ENCODE measurements at regions of chr16 and their contacts with region 1.

Region 1: GRCh38 chr16:11407047-11407982 is 62.1 kb downstream of the RMI2 start:
- DNase-seq: peak; percentile 77
- ATAC-seq: peak; percentile 62
- H3K4me3 Mint-ChIP-seq: no peak overlapping the region
- H3K27ac Mint-ChIP-seq: no peak overlapping the region
- H3K4me1 Mint-ChIP-seq: peaks cover 2% of the 10 kb centered on the region
- H3K27me3 Mint-ChIP-seq: no peaks in the 10 kb centered on the region

Region 2: DNA sequence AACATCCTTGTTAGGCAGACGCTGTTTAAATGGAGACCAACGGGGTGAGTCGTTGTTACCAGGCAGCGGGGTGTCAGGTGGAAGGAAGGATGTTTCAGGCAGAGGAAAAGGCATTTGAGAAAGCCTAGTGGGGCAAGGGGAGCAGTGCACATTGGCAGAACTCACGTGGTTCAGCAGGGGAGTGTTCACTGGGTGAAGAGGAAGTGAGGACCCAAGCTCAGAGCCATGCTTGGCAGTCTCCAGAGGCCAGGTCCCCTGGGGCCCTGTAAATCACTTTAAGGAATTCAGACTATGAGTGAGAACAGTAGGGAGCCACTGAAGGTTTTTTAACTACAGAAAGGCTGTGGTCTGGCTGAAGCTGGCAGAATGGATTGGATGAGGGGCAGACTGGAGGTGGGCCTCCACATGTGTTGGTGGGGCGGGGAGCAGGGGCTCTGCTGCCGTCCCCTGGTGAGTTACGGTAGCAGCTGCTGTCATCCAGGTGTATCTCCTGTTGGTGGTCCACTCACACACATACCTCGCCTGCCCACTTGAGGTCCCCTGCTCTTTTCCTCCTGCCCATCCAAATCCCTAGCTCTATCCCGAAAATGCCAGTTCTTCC is 457.8 kb before region 1 on chr16:
- CTCF ChIA-PET with region 1: interaction called, 17 read pairs
- POLR2A ChIA-PET with region 1: no interaction called
- DNase-seq: peak; percentile 80
- ATAC-seq: peak; percentile 76
- H3K4me3 Mint-ChIP-seq: peak overlapping the region; percentile 0
- H3K27ac Mint-ChIP-seq: peak overlapping the region; percentile 28
- H3K4me1 Mint-ChIP-seq: peaks cover 61% of the 10 kb centered on the region
- H3K27me3 Mint-ChIP-seq: no peaks in the 10 kb centered on the region

Region 3: DNA sequence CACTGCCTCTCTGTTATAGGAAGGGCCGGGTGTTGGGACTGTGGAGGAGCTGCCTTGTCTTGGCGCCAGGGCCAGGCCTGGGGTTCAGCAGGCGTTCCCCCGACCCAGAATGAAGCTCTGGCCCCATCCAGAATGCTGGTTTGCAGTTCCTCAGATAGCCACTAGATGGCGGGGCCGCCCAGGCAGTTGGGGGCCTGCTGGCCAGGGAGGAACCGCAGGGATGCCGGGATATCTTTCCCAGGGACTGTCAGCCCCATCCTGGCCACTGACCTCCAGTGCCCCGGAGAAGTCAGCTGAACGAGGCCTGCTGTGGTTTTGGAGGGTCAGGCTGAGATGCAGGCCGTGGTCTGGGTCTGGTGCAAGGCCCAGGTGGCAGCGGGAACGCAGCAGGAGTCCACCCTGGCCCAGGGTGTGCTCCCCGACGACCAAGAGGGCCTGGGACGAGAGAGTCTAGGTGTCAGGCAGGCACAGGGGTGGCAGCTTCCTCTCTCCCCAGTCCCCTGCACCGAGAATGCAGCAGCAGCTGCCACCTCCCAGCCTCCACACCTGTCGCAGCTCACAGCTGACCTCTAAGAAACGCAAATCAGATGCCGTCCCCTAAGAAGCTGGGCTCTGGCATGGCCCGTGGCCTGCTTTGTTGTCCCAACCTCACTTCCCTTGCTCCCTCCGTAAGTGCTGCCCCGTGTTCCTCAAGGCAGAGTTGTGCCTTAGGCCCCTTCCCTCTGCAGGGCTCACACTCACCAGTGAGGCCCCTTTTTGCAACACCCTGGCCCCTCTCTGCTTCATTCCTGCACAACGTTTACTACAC is 10.9 kb before region 1 on chr16:
- CTCF ChIA-PET with region 1: interaction called, 37 read pairs
- POLR2A ChIA-PET with region 1: no interaction called
- DNase-seq: peak; percentile 73
- ATAC-seq: peak; percentile 74
- H3K4me3 Mint-ChIP-seq: no peak overlapping the region
- H3K27ac Mint-ChIP-seq: peak overlapping the region; percentile 14
- H3K4me1 Mint-ChIP-seq: no peaks in the 10 kb centered on the region
- H3K27me3 Mint-ChIP-seq: no peaks in the 10 kb centered on the region

Region 4: GRCh38 chr16:11639925-11640899 is 232.9 kb after region 1 on chr16:
- CTCF ChIA-PET with region 1: interaction called, 15 read pairs
- POLR2A ChIA-PET with region 1: no interaction called
- DNase-seq: no peak
- ATAC-seq: no peak
- H3K4me3 Mint-ChIP-seq: no peak overlapping the region
- H3K27ac Mint-ChIP-seq: no peak overlapping the region
- H3K4me1 Mint-ChIP-seq: peaks cover 8% of the 10 kb centered on the region
- H3K27me3 Mint-ChIP-seq: peaks cover 13% of the 10 kb centered on the region

Measured in activated CD8-positive, alpha-beta T cell treated with anti-CD3 and anti-CD28 coated beads, Interleukin-2, amount 10 ng/mL, durations not matched to agents 7 days and 5 days (primary cell).